ENCODE measurements at regions of chr21 and their contacts with region 1.

Region 1: GRCh38 chr21:15172992-15173626 is 108.3 kb upstream of the NRIP1 start:
- DNase-seq: no peak
- ATAC-seq: no peak
- H3K4me3 ChIP-seq: no peak overlapping the region
- H3K27ac ChIP-seq: no peak overlapping the region
- H3K4me1 ChIP-seq: no peaks in the 10 kb centered on the region
- H3K27me3 ChIP-seq: no peaks in the 10 kb centered on the region
- CTCF ChIP-seq: no peak

Region 2: GRCh38 chr21:15058854-15059263 is 114.2 kb before region 1 on chr21:
- CTCF ChIA-PET with region 1: no interaction called
- POLR2A ChIA-PET with region 1: no interaction called
- intact Hi-C with region 1: no loop called
- DNase-seq: peak; percentile 88
- ATAC-seq: peak; percentile 47
- H3K4me3 ChIP-seq: peak overlapping the region; percentile 85
- H3K27ac ChIP-seq: peak overlapping the region; percentile 53
- H3K4me1 ChIP-seq: peaks cover 75% of the 10 kb centered on the region
- H3K27me3 ChIP-seq: no peaks in the 10 kb centered on the region
- CTCF ChIP-seq: no peak

Region 3: DNA sequence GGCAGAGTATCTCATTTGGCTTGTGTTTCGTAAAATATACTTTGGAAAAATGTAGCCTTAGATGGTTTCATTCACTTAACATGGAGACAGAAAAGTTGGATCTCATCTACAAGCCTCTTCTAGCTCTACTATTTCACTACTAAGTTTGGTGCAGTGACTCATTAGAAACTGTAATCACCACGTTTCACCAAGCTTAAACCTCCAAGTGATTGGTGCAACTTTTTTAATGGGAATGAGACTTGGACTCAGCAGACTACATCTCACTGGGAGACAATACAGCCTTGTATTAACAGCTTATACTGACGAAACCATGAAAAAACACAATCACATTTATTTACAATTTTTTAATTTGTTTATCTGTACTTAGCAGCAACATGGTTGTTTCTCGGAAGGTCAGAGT is 78.4 kb before region 1 on chr21:
- CTCF ChIA-PET with region 1: no interaction called
- POLR2A ChIA-PET with region 1: no interaction called
- intact Hi-C with region 1: loop called (anchors 5 kb)
- DNase-seq: no peak
- ATAC-seq: no peak
- H3K4me3 ChIP-seq: no peak overlapping the region
- H3K27ac ChIP-seq: no peak overlapping the region
- H3K4me1 ChIP-seq: peaks cover 7% of the 10 kb centered on the region; the same call in 1 of the 2 replicates
- H3K27me3 ChIP-seq: no peaks in the 10 kb centered on the region
- CTCF ChIP-seq: no peak

Region 4: DNA sequence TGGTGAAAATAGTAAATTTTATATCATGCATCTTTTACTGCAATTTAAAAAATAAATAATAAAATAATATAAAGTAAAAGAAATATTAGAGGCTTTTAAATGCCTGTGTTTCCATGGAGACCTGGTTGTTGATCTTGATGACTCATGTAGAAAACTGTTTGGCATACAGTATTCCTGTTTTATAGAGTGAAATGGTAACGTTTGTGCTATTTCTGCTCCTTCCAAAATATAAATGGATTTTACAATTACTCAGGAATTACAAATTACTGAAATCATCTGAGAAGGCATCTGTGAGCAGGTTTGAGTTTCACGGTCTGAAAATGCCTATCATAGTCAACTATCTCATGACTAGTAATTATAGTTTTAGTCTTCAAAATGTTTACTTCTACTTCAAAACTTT is 458.3 kb after region 1 on chr21:
- CTCF ChIA-PET with region 1: no interaction called
- POLR2A ChIA-PET with region 1: no interaction called
- intact Hi-C with region 1: no loop called
- DNase-seq: peak; percentile 81
- ATAC-seq: peak; percentile 88
- H3K4me3 ChIP-seq: no peak overlapping the region
- H3K27ac ChIP-seq: peak overlapping the region; percentile 47
- H3K4me1 ChIP-seq: peaks cover 20% of the 10 kb centered on the region
- H3K27me3 ChIP-seq: no peaks in the 10 kb centered on the region
- CTCF ChIP-seq: no peak